Activated CD4-positive, alpha-beta memory T cell treated with anti-CD3 and anti-CD28 coated beads, Interleukin-2, amount 10 ng/mL, durations not matched to agents 7 days and 5 days (primary cell): ENCODE measurements at regions of chr13 and their contacts with region 1.

Region 1: DNA sequence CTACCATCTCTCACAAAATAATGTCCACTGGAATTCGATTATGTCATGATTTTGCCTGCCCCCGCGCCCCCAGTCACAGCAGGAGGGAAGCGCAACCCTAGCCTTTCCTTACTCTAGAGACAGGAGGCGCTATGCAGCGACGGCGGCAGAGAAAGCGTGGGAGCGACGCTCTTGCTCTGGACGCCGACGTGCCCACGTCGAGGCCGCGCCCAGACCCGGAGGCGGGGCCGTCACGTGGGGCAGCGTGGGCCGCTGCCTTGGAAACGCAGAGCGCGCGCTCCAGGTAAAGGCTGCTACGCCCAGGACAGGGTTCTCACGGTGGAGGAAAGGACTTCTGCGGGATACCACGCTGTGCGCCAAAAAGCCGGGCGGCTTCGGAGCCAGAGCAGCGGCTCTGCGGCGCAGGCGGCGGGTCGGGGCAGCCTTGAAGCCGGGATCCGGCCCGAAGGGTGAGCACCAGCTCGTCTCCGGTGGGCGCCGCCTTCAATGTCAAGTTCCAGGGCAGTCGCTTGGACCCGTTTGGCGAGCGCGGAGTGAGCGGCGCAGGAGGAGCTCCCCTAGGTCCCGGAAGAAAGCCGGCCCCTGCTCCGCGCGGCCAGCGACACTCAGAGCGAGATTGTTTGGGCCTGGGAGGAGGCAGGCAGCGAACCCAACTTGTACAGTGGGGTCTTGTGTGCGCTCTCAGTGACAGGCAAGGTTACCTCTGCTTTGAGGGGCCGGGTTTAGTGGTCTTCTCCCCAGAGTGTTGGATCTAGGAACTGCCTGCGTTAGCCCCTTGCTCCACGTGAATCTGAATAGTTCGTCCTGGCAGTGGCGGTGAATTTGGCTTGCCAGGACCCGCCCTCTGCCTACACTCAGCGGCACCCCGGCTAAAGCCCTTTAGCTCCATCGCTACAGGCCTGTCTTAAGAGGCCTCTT is 121.7 kb downstream of the MRPL57 start:
- DNase-seq: peak; percentile 87
- H3K4me3 Mint-ChIP-seq: peak overlapping the region; percentile 84
- H3K27ac Mint-ChIP-seq: peak overlapping the region; percentile 29
- H3K4me1 Mint-ChIP-seq: peaks cover 28% of the 10 kb centered on the region
- H3K27me3 Mint-ChIP-seq: no peaks in the 10 kb centered on the region

Region 2: GRCh38 chr13:21287331-21287907 is 10.8 kb before region 1 on chr13:
- CTCF ChIA-PET with region 1: interaction called, 10 read pairs
- POLR2A ChIA-PET with region 1: no interaction called
- DNase-seq: no peak
- H3K4me3 Mint-ChIP-seq: no peak overlapping the region
- H3K27ac Mint-ChIP-seq: no peak overlapping the region
- H3K4me1 Mint-ChIP-seq: no peaks in the 10 kb centered on the region
- H3K27me3 Mint-ChIP-seq: peaks cover 19% of the 10 kb centered on the region

Region 3: DNA sequence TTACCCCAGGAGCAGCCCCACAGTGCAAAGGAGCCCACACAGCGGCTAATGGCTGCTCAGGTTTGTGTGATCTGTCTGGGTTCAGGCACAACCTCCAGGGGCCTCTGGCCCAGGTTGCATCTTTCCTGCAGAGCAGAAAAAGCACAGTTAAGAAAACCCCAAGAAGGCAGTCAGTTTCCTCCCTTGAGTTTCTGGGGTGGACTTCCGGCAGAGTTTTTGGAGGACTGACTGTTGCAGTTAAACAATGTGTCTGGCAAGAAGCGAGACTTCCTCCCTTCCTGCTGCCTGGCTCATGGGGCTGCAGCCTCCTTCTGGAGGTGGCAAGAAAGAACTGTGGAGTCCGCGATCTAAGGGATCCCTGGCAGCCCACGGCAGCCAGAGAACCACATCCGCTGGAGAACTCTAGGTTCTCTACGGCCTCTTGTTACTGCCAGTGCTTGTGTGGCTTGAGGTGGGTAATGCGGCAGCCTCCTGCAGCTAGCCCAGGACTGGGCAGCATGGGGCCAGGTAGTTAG is 46.5 kb after region 1 on chr13:
- CTCF ChIA-PET with region 1: interaction called, 10 read pairs
- POLR2A ChIA-PET with region 1: no interaction called
- DNase-seq: peak; percentile 64
- H3K4me3 Mint-ChIP-seq: peak overlapping the region; percentile 67
- H3K27ac Mint-ChIP-seq: peak overlapping the region; percentile 86
- H3K4me1 Mint-ChIP-seq: peaks cover 31% of the 10 kb centered on the region
- H3K27me3 Mint-ChIP-seq: no peaks in the 10 kb centered on the region

Region 4: DNA sequence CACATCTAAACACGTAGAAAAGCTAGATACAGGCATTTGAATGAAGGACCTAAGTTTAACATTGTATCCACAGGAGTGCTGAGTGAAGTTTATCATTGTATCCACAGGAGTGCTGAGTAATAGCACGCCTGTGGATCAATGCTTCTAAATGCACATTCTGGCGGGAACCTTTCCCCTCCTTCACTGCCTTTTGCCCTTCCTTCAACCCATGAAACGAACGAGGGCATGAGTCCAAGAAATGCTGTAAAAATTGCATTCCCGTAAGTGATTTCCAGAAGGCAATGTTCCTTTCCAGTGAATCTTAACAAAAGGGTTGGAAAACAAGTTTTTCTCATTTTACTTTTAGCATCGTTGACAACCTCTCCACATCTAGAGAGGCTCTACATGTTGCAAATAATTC is 72.8 kb after region 1 on chr13:
- CTCF ChIA-PET with region 1: interaction called, 12 read pairs
- POLR2A ChIA-PET with region 1: no interaction called
- DNase-seq: no peak
- H3K4me3 Mint-ChIP-seq: no peak overlapping the region
- H3K27ac Mint-ChIP-seq: no peak overlapping the region
- H3K4me1 Mint-ChIP-seq: no peaks in the 10 kb centered on the region
- H3K27me3 Mint-ChIP-seq: no peaks in the 10 kb centered on the region

Region 5: DNA sequence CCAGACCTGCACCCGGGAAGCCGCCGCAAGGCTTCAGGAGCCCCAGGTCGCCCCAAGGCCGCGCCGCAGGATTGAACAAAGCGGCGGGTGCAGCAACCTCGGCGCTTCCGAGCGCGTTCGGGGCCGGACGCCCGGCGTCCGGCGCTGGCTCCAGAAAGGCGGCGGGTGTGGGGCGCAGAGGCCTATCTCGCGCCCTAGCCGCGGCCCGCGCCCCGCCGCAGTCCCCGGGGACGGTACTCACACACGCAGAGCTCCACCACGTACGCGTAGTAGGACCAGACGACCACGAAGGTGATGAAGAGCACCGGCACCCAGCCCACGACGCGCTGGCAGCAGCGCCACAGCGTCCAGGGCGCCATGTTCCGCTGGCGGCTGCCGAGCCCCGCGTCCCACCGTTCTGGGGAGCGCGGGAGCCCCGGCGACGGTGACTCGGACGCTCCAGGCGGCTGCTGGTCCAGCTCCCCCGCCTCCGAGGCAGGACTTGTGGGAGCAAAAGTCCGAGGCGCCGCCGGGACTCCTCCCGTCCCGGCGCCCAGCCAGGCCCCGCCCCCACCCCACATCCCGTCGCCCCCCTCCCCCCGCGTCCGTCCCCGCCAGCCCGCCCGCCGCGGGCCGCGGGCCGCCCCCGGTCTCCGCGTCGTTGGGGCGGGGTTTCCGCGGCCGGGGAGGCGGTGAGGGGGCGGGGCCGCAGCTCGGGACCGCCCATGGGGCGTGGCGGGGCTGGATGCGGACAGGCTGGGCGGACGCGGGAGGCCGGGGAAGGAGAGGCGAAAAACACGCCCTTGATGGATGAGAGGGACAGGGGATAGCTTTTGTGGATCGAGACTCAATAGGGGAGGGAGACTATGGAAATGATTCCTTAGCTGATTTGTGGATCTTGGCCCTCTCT is 160.9 kb after region 1 on chr13 and contains the start of gene ZDHHC20:
- CTCF ChIA-PET with region 1: interaction called, 13 read pairs
- POLR2A ChIA-PET with region 1: interaction called, 23 read pairs
- DNase-seq: peak; percentile 91
- H3K4me3 Mint-ChIP-seq: peak within 1 kb of the TSS; percentile 85
- H3K27ac Mint-ChIP-seq: peak within 1 kb of the TSS; percentile 91
- H3K4me1 Mint-ChIP-seq: peaks cover 34% of the 10 kb centered on the region
- H3K27me3 Mint-ChIP-seq: no peaks in the 10 kb centered on the region
- total RNA-seq, gene ZDHHC20: 92.0 to 103 TPM

Region 6: GRCh38 chr13:21465710-21466160 is 167.6 kb after region 1 on chr13:
- CTCF ChIA-PET with region 1: interaction called, 13 read pairs
- POLR2A ChIA-PET with region 1: interaction called, 23 read pairs
- DNase-seq: no peak
- H3K4me3 Mint-ChIP-seq: no peak overlapping the region
- H3K27ac Mint-ChIP-seq: no peak overlapping the region
- H3K4me1 Mint-ChIP-seq: no peaks in the 10 kb centered on the region
- H3K27me3 Mint-ChIP-seq: peaks cover 14% of the 10 kb centered on the region

Region 7: DNA sequence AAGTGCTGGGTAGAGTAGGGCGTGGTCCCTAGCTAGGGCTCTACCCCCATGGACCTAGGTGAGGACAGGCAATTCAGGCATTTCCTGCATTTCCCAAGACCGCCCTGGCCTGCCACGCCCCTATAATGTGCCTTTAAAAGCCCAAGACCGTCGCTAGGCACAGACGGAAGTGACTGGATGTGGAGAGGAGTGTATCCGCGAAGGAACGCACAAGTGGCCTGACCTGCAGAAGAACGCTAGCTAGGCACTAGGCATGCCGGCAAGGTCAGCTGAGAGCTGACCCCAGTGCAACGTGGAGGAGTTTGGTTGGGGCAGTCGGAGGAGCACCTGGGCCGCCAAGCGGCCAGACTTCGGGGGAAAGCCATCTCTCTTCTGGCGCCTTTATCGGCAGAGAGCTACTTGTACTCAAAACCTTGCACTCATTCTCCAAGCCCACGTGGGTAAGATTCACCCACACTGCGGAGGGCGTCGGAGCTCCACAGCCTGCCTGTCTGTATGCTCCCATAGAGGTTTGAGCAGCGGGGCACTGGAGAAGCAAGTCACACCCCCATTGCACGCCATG is 742.7 kb after region 1 on chr13:
- CTCF ChIA-PET with region 1: no interaction called
- POLR2A ChIA-PET with region 1: no interaction called
- DNase-seq: no peak
- H3K4me3 Mint-ChIP-seq: peak overlapping the region; percentile 67
- H3K27ac Mint-ChIP-seq: no peak overlapping the region
- H3K4me1 Mint-ChIP-seq: no peaks in the 10 kb centered on the region
- H3K27me3 Mint-ChIP-seq: peaks cover 2% of the 10 kb centered on the region